Prostate gland (tissue), 2 donors: ENCODE measurements at regions of chr4 and their contacts with region 1.

Region 1: DNA sequence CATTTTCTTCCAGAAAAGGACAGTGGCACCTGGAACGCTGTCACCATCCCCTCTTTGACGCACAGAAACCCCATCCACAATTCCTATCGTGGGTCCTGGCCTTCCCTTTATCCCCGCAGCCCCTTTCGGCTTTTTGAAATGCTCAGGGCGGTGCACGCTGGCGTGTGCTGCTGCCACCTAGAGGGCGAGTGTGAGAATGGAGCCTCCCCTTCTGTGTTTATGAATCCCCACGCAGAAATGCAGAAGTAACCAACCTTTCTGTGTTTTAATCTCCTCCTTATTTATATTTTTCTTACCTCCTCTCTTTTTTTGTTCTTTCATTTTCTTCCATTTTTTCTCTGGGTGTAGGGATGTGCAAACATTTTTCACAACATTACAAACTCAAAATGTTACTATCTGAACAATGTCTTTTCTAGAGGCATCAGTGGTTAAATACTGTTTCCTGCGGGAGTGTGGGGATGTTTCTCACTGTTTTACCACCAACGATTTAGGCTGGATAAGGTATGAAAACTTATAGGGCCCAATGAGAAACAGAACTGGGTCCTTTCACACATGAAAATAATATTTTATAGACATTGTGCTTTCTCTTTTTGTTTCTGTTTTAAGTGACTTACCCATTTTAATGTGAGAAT is 50.0 kb downstream of the TMA16 start:
- DNase-seq: peak; percentile 25
- H3K4me3 ChIP-seq: peak overlapping the region in 1 of 2 donors; percentile 16
- H3K27ac ChIP-seq: no peak overlapping the region
- H3K4me1 ChIP-seq: no peaks in the 10 kb centered on the region
- H3K27me3 ChIP-seq: no peaks in the 10 kb centered on the region
- CTCF ChIP-seq: peak; percentile 56 to 71 (median 65)
- POLR2A ChIP-seq: no peak

Region 2: DNA sequence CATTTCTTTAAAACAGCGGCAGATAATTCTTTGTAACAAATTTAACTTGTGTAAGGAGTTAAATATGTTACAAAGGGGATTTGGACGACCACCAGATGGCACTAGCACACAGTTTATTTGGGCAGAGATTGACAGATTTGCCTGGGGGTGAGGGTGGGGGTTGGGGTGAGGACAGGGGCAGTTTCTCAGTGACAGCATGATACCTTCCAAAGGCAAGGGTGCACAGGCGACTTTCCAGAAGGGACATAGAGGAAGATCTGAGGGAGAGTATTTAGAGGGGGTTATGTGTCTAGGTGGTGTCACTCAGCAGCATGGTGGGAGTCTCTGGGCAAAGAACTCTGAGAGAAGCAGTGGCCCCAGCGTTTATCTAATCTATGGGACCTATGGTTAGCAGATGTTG is 59.6 kb before region 1 on chr4:
- intact Hi-C with region 1: loop called (anchors 5 kb)
- DNase-seq: no peak
- H3K4me3 ChIP-seq: no peak overlapping the region
- H3K27ac ChIP-seq: no peak overlapping the region
- H3K4me1 ChIP-seq: no peaks in the 10 kb centered on the region
- H3K27me3 ChIP-seq: no peaks in the 10 kb centered on the region
- CTCF ChIP-seq: peak in 2 of 4 experiments; percentile 36 to 51
- POLR2A ChIP-seq: no peak

Region 3: DNA sequence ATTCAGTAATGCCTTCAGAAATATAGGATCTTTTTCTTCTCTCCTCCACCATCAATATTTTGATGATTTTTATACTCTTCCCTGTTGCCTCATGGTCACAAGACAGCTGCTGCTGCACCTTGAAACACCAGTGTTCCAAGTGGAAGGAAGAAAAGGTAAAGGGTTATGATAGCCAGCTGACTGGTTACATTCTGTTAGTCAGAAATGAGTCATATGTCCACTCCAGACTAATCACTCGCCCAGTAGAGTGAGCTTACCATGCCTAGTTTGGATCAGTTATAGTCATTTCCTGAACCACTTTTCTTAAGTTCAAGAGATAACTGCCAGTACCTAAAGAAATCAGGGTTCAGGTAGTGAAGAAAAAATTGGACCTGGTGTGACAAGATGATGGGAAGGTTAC is 677.1 kb after region 1 on chr4:
- intact Hi-C with region 1: no loop called
- DNase-seq: no peak
- H3K4me3 ChIP-seq: no peak overlapping the region
- H3K27ac ChIP-seq: no peak overlapping the region
- H3K4me1 ChIP-seq: no peaks in the 10 kb centered on the region
- H3K27me3 ChIP-seq: no peaks in the 10 kb centered on the region
- CTCF ChIP-seq: no peak
- POLR2A ChIP-seq: no peak